Activated T-helper 2 cell treated with anti-CD3 and anti-CD28 coated beads, Interferon-gamma antibody, Interleukin-2, Interleukin-4, amounts not matched to agents 10 μg/mL and 5 μg/mL and 100 μg/mL, durations not matched to agents 14 hours and 24 hours and 36 hours (primary cell): ENCODE measurements at regions of chr13 and their contacts with region 1.

Region 1: DNA sequence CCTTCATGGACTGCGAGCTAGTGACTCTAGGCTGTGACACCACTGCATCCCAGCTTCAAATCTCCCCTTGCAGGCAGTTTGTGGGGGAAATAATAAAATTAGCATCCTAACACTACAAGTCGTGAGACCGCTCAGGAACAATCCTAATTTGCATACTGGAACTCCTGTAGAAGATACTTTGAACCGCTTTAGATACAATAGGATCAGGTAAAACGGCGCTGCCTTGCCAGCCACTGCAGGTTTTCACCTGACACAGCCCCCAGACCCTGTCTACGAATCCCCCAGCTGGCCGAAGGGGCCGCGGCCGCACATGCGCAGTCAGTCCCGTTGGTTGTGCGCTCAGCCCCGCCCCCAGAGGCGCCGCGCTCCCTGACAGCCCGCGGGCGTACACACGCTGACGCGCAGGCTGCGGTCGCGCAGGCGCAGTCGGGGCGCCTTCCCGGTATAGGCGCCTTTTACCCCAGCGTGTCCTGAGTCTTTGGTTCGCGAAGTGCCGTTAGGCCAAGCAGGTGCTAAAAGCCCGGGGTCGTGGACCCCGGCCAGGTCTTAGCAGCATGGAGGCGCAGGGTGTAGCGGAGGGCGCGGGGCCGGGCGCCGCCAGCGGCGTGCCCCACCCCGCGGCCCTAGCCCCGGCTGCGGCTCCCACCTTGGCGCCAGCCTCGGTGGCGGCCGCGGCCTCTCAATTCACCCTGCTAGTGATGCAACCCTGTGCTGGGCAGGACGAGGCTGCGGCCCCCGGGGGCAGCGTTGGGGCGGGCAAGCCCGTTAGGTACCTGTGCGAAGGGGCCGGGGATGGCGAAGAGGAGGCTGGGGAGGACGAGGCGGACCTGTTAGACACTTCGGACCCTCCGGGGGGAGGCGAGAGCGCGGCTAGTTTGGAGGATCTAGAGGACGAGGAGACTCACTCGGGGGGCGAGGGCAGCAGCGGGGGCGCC is at the start of gene RFXAP:
- DNase-seq: peak; percentile 88
- H3K4me3 Mint-ChIP-seq: peak within 1 kb of the TSS; percentile 90
- H3K27ac Mint-ChIP-seq: peak within 1 kb of the TSS; percentile 89
- H3K4me1 Mint-ChIP-seq: peaks cover 43% of the 10 kb centered on the region
- H3K27me3 Mint-ChIP-seq: peaks cover 18% of the 10 kb centered on the region
- total RNA-seq, gene RFXAP: 10.6 and 13.5 TPM in 2 replicates

Region 2: GRCh38 chr13:36766314-36766713 is 52.8 kb before region 1 on chr13:
- intact Hi-C with region 1: no loop called
- DNase-seq: no peak
- H3K4me3 Mint-ChIP-seq: no peak overlapping the region
- H3K27ac Mint-ChIP-seq: no peak overlapping the region
- H3K4me1 Mint-ChIP-seq: no peaks in the 10 kb centered on the region
- H3K27me3 Mint-ChIP-seq: no peaks in the 10 kb centered on the region

Region 3: GRCh38 chr13:36834299-36834698 is 15.2 kb after region 1 on chr13:
- intact Hi-C with region 1: loop called (anchors 2 kb)
- DNase-seq: no peak
- H3K4me3 Mint-ChIP-seq: no peak overlapping the region
- H3K27ac Mint-ChIP-seq: no peak overlapping the region
- H3K4me1 Mint-ChIP-seq: peaks cover 9% of the 10 kb centered on the region
- H3K27me3 Mint-ChIP-seq: no peaks in the 10 kb centered on the region

Region 4: GRCh38 chr13:36999054-36999714 is 180.1 kb after region 1 on chr13 and contains the start of gene ALG5:
- intact Hi-C with region 1: loop called (anchors 1 kb)
- DNase-seq: peak; percentile 93
- H3K4me3 Mint-ChIP-seq: peak within 1 kb of the TSS; percentile 100
- H3K27ac Mint-ChIP-seq: peak within 1 kb of the TSS; percentile 100
- H3K4me1 Mint-ChIP-seq: peaks cover 37% of the 10 kb centered on the region
- H3K27me3 Mint-ChIP-seq: no peaks in the 10 kb centered on the region
- total RNA-seq, gene ALG5: 45.6 and 49.8 TPM in 2 replicates

Region 5: DNA sequence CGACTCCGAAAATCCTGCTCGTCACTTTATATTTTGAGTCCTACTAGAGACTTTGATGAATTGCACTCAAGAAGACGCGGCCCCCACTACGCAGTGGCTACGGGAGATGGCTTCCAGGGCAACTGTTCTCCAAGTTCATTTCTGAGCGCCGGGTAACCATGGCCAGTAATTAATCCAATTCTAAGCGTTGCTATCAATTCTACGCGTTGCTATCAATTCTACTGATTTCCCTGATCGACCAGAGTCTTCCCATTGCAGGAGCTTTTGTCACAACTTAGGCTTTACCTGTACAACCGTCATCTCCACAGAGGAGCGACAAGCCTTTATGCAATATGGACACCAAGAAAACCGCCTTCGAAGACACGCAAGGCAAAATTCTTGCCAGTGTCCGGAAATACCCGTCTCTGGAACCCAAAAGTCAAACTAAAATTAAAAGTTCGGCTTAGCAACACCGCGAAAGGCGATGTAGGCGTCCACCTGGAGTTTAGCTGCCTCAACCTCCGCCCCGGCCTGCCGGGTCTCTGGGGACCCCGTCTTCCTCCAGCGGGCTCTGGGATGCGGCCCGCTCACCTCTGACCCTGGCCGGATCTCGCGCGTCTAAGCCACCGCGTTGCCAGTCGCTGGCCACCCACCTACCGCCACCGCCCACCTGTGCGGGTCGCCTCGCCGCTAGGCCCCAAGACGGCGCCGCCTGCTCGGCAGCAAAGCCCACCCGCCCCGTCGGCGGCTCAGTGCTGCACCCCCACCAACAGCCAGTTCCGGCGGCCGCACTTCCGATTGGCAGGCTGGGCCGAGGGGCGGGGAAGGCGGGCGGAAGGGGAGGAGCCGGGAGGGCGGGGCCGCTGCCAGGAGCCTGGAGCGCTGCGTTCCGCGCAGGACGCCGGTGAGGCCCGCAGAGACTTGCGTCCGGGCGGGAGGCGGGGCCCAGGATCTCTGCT is 240.1 kb after region 1 on chr13 and contains the start of gene SUPT20H:
- intact Hi-C with region 1: loop called (anchors 2 kb)
- DNase-seq: peak; percentile 86
- H3K4me3 Mint-ChIP-seq: peak within 1 kb of the TSS; percentile 96
- H3K27ac Mint-ChIP-seq: peak within 1 kb of the TSS; percentile 94
- H3K4me1 Mint-ChIP-seq: peaks cover 18% of the 10 kb centered on the region
- H3K27me3 Mint-ChIP-seq: peaks cover 5% of the 10 kb centered on the region
- total RNA-seq, gene SUPT20H: 75.8 and 77.8 TPM in 2 replicates